ENCODE measurements at regions of chr1 and their contacts with region 1.

Region 1: DNA sequence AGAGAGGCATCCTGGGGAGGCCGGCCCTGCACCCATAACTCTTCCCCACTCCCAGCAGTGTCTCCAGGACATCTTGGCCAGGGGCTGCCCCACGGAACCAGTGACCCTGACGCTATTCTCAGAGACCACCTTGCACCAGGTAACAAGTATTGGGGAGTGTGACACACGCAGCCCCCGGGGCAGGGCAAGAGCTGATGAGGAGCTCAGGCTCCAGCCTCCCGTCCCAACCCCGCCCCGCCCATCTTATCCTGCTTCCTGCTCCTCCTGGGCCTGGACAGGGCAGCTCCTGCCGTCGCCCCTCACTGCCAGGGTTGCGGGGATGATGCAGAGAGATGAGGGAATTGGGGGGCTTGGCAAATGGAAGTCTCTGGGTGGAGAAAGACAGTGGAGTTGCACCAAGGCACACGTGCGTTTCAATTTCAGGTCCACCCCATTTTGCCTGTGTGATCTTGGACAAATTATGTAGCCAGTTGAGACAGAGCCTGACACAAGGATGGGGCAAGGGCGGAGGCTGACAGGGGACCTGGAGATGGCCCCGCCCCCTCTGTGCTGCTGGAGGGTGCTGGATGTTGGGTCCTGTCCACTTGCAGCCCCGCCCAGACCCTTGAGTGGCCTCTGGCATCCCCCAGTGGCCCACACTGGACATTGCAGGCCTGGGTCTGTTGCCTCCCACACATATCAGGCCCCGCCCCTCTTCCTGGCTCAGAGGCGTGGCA is 10.7 kb downstream of the CLCNKA start:
- DNase-seq: no peak
- H3K4me3 ChIP-seq: no peak overlapping the region
- H3K27me3 ChIP-seq: no peaks in the 10 kb centered on the region
- CTCF ChIP-seq: peak; percentile 99

Region 2: GRCh38 chr1:16017461-16018303 is 14.9 kb before region 1 on chr1 and contains the start of gene HSPB7:
- CTCF ChIA-PET with region 1: interaction called, 29 read pairs
- POLR2A ChIA-PET with region 1: no interaction called
- DNase-seq: peak; percentile 55
- H3K4me3 ChIP-seq: peak within 1 kb of the TSS; percentile 30
- H3K27me3 ChIP-seq: peaks cover 2% of the 10 kb centered on the region; the same call in 1 of the 2 replicates
- CTCF ChIP-seq: peak; percentile 26; the same call in 1 of the 2 replicates
- polyA plus RNA-seq, gene HSPB7: 32.5 and 66.6 TPM in 2 replicates

Region 3: DNA sequence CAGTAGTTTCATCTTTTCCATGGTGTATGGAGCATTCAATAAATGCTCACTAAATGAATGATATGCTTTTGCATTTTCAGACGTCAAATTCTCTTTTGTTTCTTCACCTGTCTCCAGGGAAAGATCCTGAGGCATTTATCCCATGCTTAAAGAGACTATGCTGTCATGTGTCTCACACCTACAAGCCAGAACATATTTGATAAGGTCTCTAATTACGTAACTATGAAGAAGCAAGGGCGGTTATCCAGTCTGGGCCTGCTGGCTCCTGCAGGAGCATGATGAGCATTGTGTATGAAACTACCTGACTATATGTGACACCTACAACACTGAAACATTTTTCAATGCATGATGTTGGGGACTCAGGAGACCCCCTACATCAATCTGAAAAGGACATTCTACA is 267.9 kb after region 1 on chr1:
- CTCF ChIA-PET with region 1: no interaction called
- POLR2A ChIA-PET with region 1: no interaction called
- DNase-seq: no peak
- H3K4me3 ChIP-seq: no peak overlapping the region
- H3K27me3 ChIP-seq: no peaks in the 10 kb centered on the region
- CTCF ChIP-seq: no peak